ENCODE measurements at regions of chr5 and their contacts with region 1.

Region 1: DNA sequence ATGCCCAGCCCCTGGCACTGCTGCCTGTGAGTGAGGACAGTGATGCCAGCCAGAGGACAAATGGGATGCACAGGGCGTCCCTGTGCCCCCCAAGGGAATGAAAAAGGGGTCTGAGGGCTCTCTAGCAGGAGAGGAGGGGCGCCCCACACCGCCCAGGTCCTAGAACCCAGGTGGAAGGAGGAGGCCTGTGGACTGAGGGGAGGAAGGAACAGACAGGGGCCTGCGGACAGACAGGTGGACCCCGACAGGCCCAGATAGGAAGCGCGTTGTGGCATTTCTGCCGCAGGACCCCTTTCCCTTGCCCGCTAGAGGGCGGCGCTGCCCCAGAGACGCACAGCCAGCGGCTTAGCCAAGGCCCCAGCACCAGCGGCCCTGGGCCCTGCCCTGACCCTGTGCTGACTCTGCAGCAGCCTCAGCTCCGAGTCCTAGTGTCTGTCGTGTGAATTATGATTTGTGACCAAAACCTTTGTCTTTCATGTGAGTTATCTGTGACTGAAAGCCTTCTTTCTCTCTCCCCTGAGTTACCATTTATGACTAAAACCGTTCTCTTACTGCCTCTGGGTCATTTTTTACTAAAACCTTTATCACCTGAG is 30.7 kb downstream of the TRIP13 start:
- DNase-seq: peak; percentile 74
- H3K4me3 Mint-ChIP-seq: no peak overlapping the region
- H3K27ac Mint-ChIP-seq: no peak overlapping the region
- H3K4me1 Mint-ChIP-seq: peaks cover 5% of the 10 kb centered on the region
- H3K27me3 Mint-ChIP-seq: peaks cover 22% of the 10 kb centered on the region

Region 2: DNA sequence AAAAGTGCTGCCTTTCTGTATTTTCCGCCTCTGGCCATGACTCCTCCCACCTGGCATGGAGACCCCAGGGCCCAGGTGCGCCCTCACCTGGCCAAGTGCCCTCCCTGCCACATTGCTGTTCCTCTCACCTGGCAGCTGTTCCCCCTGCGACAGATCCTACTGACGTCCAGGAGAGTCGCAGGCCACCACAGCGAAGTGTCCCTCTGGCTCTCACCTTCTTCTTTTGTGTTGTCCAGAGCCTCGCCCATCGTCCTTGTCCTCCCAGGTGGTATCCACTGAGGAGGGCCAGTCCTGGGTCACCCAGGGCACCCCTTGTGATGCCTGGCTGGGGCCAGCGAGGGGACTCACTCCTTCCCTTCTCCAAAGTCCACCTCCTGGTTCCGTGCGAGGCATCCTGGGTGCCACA is 87.9 kb after region 1 on chr5:
- CTCF ChIA-PET with region 1: interaction called, 15 read pairs
- POLR2A ChIA-PET with region 1: no interaction called
- DNase-seq: peak; percentile 52
- H3K4me3 Mint-ChIP-seq: no peak overlapping the region
- H3K27ac Mint-ChIP-seq: no peak overlapping the region
- H3K4me1 Mint-ChIP-seq: peaks cover 17% of the 10 kb centered on the region
- H3K27me3 Mint-ChIP-seq: peaks cover 36% of the 10 kb centered on the region

Region 3: DNA sequence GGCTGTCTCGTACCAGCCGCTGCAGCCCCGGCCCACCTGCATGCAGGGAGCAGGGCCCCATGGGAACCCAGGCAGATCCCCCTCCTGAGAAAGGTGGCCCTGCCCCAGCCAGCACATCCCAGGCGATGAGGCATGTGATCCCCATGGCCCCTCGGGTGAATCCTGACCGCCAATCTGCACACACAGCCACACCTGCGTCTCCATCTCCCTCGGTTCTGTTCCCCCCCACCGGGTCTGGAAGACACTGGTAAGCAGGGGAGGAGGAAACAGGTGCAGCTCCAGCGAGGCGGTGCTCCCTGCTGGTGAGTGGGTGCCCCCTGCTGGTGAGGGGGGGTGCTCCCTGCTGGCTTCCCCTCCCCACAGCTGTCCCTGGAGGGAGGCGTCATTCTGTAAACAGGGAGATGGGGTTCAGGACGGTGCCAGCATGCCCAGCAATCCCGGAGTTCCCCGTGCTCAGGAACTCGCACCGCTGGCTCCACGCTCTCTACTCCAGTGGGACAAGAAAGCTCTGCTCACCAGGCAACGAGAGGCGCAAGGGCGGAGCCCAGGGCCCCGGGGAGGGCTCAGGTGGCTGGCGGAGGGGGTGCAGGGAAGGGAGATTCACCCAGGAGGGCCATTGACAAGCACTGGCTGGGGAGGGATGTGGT is 216.9 kb after region 1 on chr5:
- CTCF ChIA-PET with region 1: interaction called, 44 read pairs
- POLR2A ChIA-PET with region 1: no interaction called
- DNase-seq: peak; percentile 81
- H3K4me3 Mint-ChIP-seq: no peak overlapping the region
- H3K27ac Mint-ChIP-seq: no peak overlapping the region
- H3K4me1 Mint-ChIP-seq: peaks cover 3% of the 10 kb centered on the region
- H3K27me3 Mint-ChIP-seq: peaks cover 2% of the 10 kb centered on the region

Region 4: GRCh38 chr5:1174122-1174936 is 251.0 kb after region 1 on chr5:
- CTCF ChIA-PET with region 1: interaction called, 17 read pairs
- POLR2A ChIA-PET with region 1: no interaction called
- DNase-seq: peak; percentile 47
- H3K4me3 Mint-ChIP-seq: no peak overlapping the region
- H3K27ac Mint-ChIP-seq: no peak overlapping the region
- H3K4me1 Mint-ChIP-seq: peaks cover 7% of the 10 kb centered on the region
- H3K27me3 Mint-ChIP-seq: no peaks in the 10 kb centered on the region